Activated CD8-positive, alpha-beta memory T cell treated with anti-CD3 and anti-CD28 coated beads, Interleukin-2, amount 10 ng/mL, durations not matched to agents 7 days and 5 days (primary cell): ENCODE measurements at regions of chr2 and their contacts with region 1.

Region 1: DNA sequence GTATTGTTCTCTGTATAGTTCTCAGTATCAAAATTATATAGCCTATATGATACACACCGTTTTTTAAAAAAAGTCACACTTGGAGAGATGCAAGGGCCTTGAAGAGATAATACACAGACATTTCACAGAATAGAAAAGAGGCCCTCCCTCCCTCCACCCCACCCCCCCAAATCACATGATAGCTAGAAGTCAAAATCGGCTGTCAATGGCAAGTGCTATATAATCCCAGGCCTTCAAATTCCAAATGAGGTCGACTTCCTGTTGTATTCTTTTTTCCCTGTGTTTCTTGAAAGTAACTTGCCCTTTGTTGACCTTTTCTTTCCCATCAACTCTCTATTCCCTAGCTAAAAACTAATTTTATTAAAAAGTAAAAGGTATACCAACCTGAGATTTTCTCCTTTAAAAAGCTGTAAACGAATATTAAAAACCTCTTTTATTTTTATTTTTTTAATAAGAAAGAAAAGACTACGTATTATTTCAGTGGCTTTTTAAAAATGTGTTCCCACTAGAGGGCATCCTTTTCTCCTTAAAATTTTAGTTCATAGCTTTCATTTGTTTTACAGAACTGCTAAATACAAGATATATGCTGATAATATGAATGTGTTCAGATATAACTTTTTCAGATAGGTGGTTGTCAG is 46.6 kb downstream of the KCMF1 start:
- DNase-seq: no peak
- ATAC-seq: no peak
- H3K4me3 Mint-ChIP-seq: no peak overlapping the region
- H3K27ac Mint-ChIP-seq: peak overlapping the region; percentile 19
- H3K4me1 Mint-ChIP-seq: peaks cover 39% of the 10 kb centered on the region
- H3K27me3 Mint-ChIP-seq: no peaks in the 10 kb centered on the region

Region 2: GRCh38 chr2:84856787-84857186 is 160.7 kb before region 1 on chr2:
- CTCF ChIA-PET with region 1: no interaction called
- DNase-seq: peak; percentile 57
- ATAC-seq: peak; percentile 70
- H3K4me3 Mint-ChIP-seq: no peak overlapping the region
- H3K27ac Mint-ChIP-seq: peak overlapping the region; percentile 11
- H3K4me1 Mint-ChIP-seq: peaks cover 61% of the 10 kb centered on the region
- H3K27me3 Mint-ChIP-seq: no peaks in the 10 kb centered on the region

Region 3: GRCh38 chr2:85032621-85033020 is 15.1 kb after region 1 on chr2:
- CTCF ChIA-PET with region 1: interaction called, 10 read pairs
- DNase-seq: no peak
- ATAC-seq: no peak
- H3K4me3 Mint-ChIP-seq: no peak overlapping the region
- H3K27ac Mint-ChIP-seq: no peak overlapping the region
- H3K4me1 Mint-ChIP-seq: no peaks in the 10 kb centered on the region
- H3K27me3 Mint-ChIP-seq: no peaks in the 10 kb centered on the region